ENCODE measurements at regions of chr12 and their contacts with region 1.

Region 1: GRCh38 chr12:26651566-26652188 is 181.3 kb downstream of the ITPR2 start:
- DNase-seq: peak; percentile 18 to 37 (median 19)
- H3K4me3 ChIP-seq: no peak overlapping the region
- H3K4me3 Mint-ChIP-seq: no peak overlapping the region
- H3K27ac ChIP-seq: no peak overlapping the region
- H3K27ac Mint-ChIP-seq: no peak overlapping the region
- H3K4me1 ChIP-seq: no peaks in the 10 kb centered on the region
- H3K4me1 Mint-ChIP-seq: no peaks in the 10 kb centered on the region
- H3K27me3 ChIP-seq: no peaks in the 10 kb centered on the region
- H3K27me3 Mint-ChIP-seq: no peaks in the 10 kb centered on the region
- CTCF ChIP-seq: peak; percentile 84

Region 2: GRCh38 chr12:25436203-25437030 is 1215.3 kb before region 1 on chr12:
- intact Hi-C with region 1: loop called in 1 of 2 experiments (anchors 5 kb)
- DNase-seq: peak; percentile 19 to 35 (median 20)
- H3K4me3 ChIP-seq: peak overlapping the region in 2 of 3 experiments; percentile 20 to 46
- H3K4me3 Mint-ChIP-seq: peak overlapping the region; percentile 20 to 44
- H3K27ac ChIP-seq: no peak overlapping the region
- H3K27ac Mint-ChIP-seq: peak overlapping the region in 1 of 7 donors; percentile 19
- H3K4me1 ChIP-seq: no peaks in the 10 kb centered on the region
- H3K4me1 Mint-ChIP-seq: peaks cover 2% of the 10 kb centered on the region
- H3K27me3 ChIP-seq: no peaks in the 10 kb centered on the region
- H3K27me3 Mint-ChIP-seq: peaks cover 1 to 4% (median 2%) of the 10 kb centered on the region in 3 donors
- CTCF ChIP-seq: peak; percentile 86

Region 3: GRCh38 chr12:26434299-26435068 is 217.2 kb before region 1 on chr12:
- intact Hi-C with region 1: loop called (anchors 5 kb)
- DNase-seq: peak; percentile 31 to 49 (median 47)
- H3K4me3 ChIP-seq: no peak overlapping the region
- H3K4me3 Mint-ChIP-seq: no peak overlapping the region
- H3K27ac ChIP-seq: no peak overlapping the region
- H3K27ac Mint-ChIP-seq: no peak overlapping the region
- H3K4me1 ChIP-seq: no peaks in the 10 kb centered on the region
- H3K4me1 Mint-ChIP-seq: no peaks in the 10 kb centered on the region
- H3K27me3 ChIP-seq: no peaks in the 10 kb centered on the region
- H3K27me3 Mint-ChIP-seq: no peaks in the 10 kb centered on the region
- CTCF ChIP-seq: peak; percentile 86

Region 4: DNA sequence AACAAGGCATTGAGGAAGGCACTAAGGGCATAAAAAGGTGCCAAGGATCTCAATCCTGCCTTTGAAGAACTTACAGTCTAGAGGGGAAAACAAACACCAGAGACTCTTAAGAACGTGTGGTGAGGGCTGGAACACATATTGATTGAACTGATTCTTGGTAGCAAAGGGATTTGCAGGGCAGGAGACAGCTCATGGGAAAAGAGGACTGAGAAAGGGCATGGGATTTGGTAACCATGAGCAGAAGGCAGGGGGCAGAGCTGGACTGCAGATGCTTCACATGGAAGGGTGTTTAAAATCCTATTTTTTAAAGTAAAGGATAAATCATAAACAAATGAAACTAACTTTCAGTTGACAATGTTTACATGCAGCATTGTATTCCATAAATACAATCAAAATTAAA is 21.8 kb before region 1 on chr12:
- intact Hi-C with region 1: no loop called
- DNase-seq: no peak
- H3K4me3 ChIP-seq: no peak overlapping the region
- H3K4me3 Mint-ChIP-seq: no peak overlapping the region
- H3K27ac ChIP-seq: no peak overlapping the region
- H3K27ac Mint-ChIP-seq: peak overlapping the region in 1 of 7 donors; percentile 6
- H3K4me1 ChIP-seq: no peaks in the 10 kb centered on the region
- H3K4me1 Mint-ChIP-seq: no peaks in the 10 kb centered on the region
- H3K27me3 ChIP-seq: no peaks in the 10 kb centered on the region
- H3K27me3 Mint-ChIP-seq: peaks cover 0 to 2% (median 1%) of the 10 kb centered on the region in 3 donors
- CTCF ChIP-seq: no peak

Measured in CD14-positive monocyte (primary cell).